Activated naive CD4-positive, alpha-beta T cell treated with anti-CD3 and anti-CD28 coated beads for 36 hours (primary cell): ENCODE measurements at regions of chr9 and their contacts with region 1.

Region 1: DNA sequence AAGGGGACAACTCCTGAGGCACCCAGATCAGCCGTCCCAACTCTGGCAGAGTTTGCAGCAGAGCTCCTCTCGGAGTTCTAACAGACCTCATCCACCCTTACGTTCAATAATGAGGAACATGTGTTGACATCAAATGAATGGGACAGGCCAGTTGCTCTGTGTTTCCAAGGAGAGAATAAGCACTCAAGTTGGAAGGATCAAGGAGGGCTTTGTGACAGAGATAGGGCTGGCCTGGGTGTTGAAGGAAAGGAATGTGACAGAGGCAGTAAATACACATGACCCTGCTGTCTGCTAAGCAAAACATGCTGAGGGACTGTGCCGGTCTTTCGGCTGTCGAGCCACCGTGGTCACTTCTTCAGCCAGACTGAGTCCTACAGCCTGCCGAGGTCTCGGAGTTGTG is 48.2 kb downstream of the GPR107 start:
- DNase-seq: no peak
- H3K4me3 Mint-ChIP-seq: no peak overlapping the region
- H3K27ac Mint-ChIP-seq: no peak overlapping the region
- H3K4me1 Mint-ChIP-seq: peaks cover 10% of the 10 kb centered on the region
- H3K27me3 Mint-ChIP-seq: no peaks in the 10 kb centered on the region

Region 2: DNA sequence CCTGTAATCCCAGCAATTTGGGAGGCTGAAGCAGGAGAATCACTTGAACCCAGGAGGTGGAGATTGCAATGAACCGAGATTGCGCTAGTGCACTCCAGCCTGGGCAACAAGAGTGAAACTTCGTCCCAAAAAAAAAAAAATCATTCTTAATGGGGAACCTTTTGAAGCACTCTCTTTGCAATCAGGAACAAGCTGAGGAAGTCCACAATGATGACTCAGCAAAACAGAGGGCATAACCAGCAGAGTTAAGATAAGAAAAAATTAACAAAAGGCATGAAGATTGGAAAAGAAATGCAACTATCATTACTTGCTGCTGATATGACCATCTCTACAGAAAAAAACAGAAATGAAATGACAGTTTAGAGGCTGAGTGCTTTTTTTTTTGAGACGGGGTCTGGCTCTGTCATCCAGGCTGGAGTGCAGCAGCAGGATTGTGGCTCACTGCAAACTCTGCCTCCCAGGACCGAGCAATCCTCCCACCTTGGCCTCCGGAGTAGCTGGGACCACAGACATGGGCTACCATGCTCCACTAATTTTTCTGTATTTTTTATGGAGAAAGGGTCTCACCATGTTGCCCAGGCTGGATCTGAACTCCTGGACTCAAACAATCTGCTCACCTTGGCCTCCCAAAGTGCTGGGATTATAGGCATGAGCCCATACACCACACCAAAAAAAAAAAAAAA is 146.9 kb before region 1 on chr9:
- CTCF ChIA-PET with region 1: interaction called, 11 read pairs
- intact Hi-C with region 1: no loop called
- DNase-seq: no peak
- H3K4me3 Mint-ChIP-seq: no peak overlapping the region
- H3K27ac Mint-ChIP-seq: peak overlapping the region; percentile 13
- H3K4me1 Mint-ChIP-seq: peaks cover 49% of the 10 kb centered on the region
- H3K27me3 Mint-ChIP-seq: no peaks in the 10 kb centered on the region